ENCODE measurements at regions of chr13 and their contacts with region 1.

Region 1: DNA sequence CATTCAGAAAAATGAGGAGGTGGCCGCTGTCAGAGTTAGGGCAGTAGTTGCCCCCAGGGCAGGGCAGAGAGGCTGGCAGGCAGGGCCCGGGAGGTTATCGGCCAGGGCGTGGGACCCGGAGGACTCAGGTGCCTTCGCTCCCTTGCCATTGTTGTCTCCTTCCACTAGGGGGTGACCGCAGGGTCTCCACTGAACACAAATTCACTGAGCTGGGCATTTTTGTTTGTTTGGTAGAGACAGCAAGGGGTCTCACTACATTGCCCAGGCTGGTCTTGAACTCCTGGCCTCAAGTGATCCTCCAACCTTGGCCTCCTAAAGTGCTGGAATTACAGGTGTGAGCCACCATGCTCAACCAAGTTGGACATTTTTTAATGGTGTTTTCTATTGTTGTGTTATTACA is 25.1 kb downstream of the CARS2 start:
- DNase-seq: no peak
- ATAC-seq: no peak
- H3K4me3 Mint-ChIP-seq: no peak overlapping the region
- H3K27ac Mint-ChIP-seq: peak overlapping the region; percentile 35
- H3K4me1 Mint-ChIP-seq: peaks cover 37% of the 10 kb centered on the region
- H3K27me3 Mint-ChIP-seq: no peaks in the 10 kb centered on the region
- CTCF ChIP-seq: no peak

Region 2: GRCh38 chr13:110471833-110472162 is 209.1 kb before region 1 on chr13:
- CTCF ChIA-PET with region 1: no interaction called
- POLR2A ChIA-PET with region 1: interaction called, 6 read pairs
- intact Hi-C with region 1: loop called (anchors 1 kb)
- DNase-seq: peak; percentile 59
- ATAC-seq: peak; percentile 93
- H3K4me3 Mint-ChIP-seq: peak overlapping the region; percentile 73
- H3K27ac Mint-ChIP-seq: peak overlapping the region; percentile 83
- H3K4me1 Mint-ChIP-seq: peaks cover 55% of the 10 kb centered on the region
- H3K27me3 Mint-ChIP-seq: no peaks in the 10 kb centered on the region
- CTCF ChIP-seq: no peak

Region 3: GRCh38 chr13:110644892-110645521 is 35.8 kb before region 1 on chr13:
- CTCF ChIA-PET with region 1: interaction called, 13 read pairs
- POLR2A ChIA-PET with region 1: interaction called, 20 read pairs
- intact Hi-C with region 1: loop called (anchors 5 kb)
- DNase-seq: peak; percentile 42
- ATAC-seq: peak; percentile 92
- H3K4me3 Mint-ChIP-seq: no peak overlapping the region
- H3K27ac Mint-ChIP-seq: no peak overlapping the region
- H3K4me1 Mint-ChIP-seq: peaks cover 31% of the 10 kb centered on the region
- H3K27me3 Mint-ChIP-seq: no peaks in the 10 kb centered on the region
- CTCF ChIP-seq: no peak

Region 4: DNA sequence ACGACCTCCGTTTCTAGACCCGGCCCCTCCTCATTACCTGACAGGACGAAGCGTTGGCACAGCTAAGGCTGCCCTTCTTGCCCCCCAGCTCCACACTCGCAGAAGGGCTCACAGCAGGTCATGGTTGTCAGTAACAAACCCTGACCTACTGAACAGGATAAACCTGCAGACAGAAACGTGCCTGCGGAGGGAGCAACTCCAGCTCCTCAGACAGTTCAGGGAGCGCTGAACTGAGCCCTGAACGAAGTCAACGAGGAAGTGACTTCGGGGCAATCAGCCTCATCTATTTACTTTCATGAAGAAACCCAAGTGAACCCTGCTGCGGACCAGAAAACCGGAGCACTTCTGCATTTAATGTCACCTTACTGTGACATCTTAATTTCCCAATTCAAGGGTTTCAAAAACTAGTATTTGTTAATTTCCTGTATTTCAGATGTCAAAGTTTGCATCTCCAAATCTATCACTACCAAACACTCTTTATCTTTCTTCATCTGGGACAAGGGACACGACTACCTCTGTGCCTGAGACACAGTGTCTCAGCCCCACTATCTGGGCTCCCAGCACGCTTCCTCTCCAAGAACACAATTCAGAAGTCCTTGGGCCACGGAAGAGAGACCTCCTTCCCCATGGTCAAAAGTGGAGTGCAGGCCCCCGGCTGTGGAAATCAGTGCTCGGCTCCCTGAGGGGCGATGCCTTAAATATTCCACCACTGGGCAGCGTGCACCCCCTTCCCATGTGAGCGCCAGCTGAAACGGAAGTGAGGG is 15.2 kb before region 1 on chr13:
- CTCF ChIA-PET with region 1: interaction called, 5 read pairs
- POLR2A ChIA-PET with region 1: interaction called, 40 read pairs
- intact Hi-C with region 1: loop called (anchors 1 kb)
- DNase-seq: no peak
- ATAC-seq: peak; percentile 96
- H3K4me3 Mint-ChIP-seq: peak overlapping the region; percentile 67
- H3K27ac Mint-ChIP-seq: peak overlapping the region; percentile 80
- H3K4me1 Mint-ChIP-seq: peaks cover 69% of the 10 kb centered on the region
- H3K27me3 Mint-ChIP-seq: no peaks in the 10 kb centered on the region
- CTCF ChIP-seq: no peak

Region 5: GRCh38 chr13:110698689-110699088 is 17.8 kb after region 1 on chr13:
- CTCF ChIA-PET with region 1: no interaction called
- POLR2A ChIA-PET with region 1: no interaction called
- intact Hi-C with region 1: no loop called
- DNase-seq: no peak
- ATAC-seq: peak; percentile 25
- H3K4me3 Mint-ChIP-seq: no peak overlapping the region
- H3K27ac Mint-ChIP-seq: peak overlapping the region; percentile 20
- H3K4me1 Mint-ChIP-seq: peaks cover 41% of the 10 kb centered on the region
- H3K27me3 Mint-ChIP-seq: no peaks in the 10 kb centered on the region
- CTCF ChIP-seq: no peak

Region 6: GRCh38 chr13:110799246-110800236 is 118.7 kb after region 1 on chr13:
- CTCF ChIA-PET with region 1: no interaction called
- POLR2A ChIA-PET with region 1: no interaction called
- intact Hi-C with region 1: no loop called
- DNase-seq: no peak
- ATAC-seq: no peak
- H3K4me3 Mint-ChIP-seq: no peak overlapping the region
- H3K27ac Mint-ChIP-seq: no peak overlapping the region
- H3K4me1 Mint-ChIP-seq: no peaks in the 10 kb centered on the region
- H3K27me3 Mint-ChIP-seq: peaks cover 37% of the 10 kb centered on the region
- CTCF ChIP-seq: no peak

Region 7: DNA sequence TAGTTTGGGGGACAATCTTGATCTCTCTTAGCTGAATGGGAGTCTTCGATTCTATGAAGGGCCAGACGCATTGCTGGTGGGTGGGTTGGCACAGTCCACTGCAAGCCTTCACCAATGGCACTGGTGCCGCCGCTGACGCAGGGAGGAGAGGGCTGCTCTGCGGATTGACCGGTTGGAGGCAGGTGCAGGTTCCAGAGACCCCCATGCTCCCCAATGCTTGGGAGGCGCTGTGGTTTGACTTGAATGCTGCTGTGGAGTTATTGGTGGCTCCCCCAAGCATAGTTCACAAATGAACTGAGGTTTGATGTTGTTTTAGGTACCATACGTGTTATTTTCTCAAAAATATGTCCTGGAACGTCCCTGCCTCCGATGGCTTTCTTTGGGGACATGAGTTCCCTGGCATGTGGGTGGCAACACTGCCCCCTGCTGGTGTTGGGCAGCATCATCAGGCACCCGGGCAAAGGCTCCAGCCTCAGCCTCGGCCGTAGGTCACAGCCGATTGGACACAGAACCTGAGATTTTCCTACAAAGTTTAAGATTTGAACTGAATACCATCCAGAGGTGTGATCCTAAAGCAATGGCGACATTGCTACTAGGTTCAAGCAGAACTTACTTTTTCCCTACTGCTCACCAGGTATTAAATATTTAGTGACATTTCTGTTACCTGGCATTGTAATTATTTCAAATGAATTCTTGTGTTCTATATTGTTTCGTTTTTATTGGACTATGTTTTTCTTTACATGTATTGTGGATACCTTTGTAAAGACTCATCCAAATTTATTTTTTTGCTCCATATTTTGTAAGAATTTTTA is 138.6 kb after region 1 on chr13:
- CTCF ChIA-PET with region 1: interaction called, 3 read pairs
- POLR2A ChIA-PET with region 1: no interaction called
- intact Hi-C with region 1: loop called (anchors 1 kb)
- DNase-seq: peak; percentile 64
- ATAC-seq: peak; percentile 92
- H3K4me3 Mint-ChIP-seq: no peak overlapping the region
- H3K27ac Mint-ChIP-seq: no peak overlapping the region
- H3K4me1 Mint-ChIP-seq: peaks cover 3% of the 10 kb centered on the region
- H3K27me3 Mint-ChIP-seq: peaks cover 2% of the 10 kb centered on the region
- CTCF ChIP-seq: peak; percentile 67